ENCODE measurements at regions of chr17 and their contacts with region 1.

Region 1: DNA sequence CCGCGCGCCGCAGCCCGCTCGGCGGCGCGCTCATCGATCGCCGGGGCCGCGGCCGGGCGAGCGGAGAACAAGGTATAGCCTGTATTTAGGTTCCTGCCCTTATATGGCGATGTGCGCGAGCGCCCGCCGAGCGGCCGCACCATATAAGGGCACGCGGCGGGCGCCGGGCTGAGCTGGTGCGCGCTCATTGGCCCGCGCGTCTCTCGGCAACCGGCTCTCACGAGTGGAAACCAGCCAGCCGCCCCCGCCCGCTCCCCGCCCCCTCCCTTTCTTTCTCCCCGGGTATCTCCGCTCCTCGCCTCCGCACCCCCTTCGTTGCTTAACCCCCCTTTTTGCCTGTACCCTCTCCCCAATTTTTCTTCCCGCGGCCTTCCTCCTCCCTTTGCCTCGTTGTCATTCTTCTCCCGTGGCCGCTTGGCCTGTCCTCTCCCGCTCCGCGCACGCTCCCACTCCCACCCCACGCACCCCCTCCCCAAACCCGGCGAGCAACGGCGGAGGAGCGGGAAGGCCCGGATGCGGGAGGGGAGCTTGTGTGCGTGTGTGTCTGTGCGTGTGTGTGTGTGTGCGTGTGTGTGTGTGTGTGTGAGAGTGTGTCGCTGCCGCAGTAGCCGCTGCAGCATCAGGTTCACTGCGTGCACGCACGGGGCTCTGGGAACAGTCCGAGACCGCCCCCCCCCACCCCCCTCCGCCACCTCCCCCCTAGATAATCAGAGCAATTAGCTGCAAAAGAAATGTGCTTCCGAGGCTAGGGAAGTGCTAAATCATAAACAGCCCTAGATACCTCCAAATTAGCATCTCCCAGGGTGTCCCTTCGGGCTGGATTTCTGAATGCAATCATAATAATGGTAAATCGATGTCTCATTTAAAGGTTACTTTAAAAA is 13.5 kb upstream of the CBX8 start:
- DNase-seq: no peak
- H3K4me3 ChIP-seq: peak overlapping the region; percentile 7 to 31
- H3K27ac ChIP-seq: no peak overlapping the region
- H3K4me1 ChIP-seq: peaks cover 23 to 43% of the 10 kb centered on the region in 2 donors
- H3K27me3 ChIP-seq: peaks cover 67% of the 10 kb centered on the region
- CTCF ChIP-seq: no peak

Region 2: DNA sequence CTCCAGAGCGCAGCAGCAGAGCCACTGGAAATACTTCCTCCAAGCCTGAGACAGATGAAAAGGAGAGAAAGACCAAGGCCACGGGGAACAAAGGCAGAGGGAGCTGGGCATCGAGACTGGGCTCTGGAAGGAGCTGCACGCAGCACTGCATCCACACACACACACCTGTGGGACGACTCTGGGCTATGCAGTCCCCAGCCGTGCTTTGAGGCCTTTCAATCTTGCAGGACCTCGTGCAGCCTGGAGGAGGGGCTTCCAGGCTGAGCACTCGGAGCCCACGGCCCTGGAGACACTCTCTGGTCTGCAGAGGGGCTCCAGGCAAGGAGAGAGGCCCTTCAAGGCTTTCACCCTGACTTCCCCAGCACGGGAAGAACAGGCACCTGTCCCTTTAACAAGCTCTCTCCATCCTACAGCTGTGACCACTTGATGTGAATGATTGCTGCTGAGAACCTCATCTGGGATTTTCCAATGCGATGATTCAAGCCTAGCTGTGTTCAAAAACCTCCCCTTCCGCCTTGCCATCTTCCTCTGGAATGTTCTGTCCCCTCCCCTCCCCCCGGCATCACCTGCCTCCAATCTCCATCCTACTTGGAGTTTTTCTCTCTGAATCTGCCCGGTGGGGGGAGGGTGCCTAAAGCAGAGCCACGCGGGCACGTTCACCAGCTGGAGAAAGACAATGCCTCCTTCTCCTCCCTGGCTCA is 237.0 kb before region 1 on chr17:
- intact Hi-C with region 1: no loop called
- DNase-seq: no peak
- H3K4me3 ChIP-seq: no peak overlapping the region
- H3K27ac ChIP-seq: no peak overlapping the region
- H3K4me1 ChIP-seq: no peaks in the 10 kb centered on the region
- H3K27me3 ChIP-seq: no peaks in the 10 kb centered on the region
- CTCF ChIP-seq: no peak

Region 3: DNA sequence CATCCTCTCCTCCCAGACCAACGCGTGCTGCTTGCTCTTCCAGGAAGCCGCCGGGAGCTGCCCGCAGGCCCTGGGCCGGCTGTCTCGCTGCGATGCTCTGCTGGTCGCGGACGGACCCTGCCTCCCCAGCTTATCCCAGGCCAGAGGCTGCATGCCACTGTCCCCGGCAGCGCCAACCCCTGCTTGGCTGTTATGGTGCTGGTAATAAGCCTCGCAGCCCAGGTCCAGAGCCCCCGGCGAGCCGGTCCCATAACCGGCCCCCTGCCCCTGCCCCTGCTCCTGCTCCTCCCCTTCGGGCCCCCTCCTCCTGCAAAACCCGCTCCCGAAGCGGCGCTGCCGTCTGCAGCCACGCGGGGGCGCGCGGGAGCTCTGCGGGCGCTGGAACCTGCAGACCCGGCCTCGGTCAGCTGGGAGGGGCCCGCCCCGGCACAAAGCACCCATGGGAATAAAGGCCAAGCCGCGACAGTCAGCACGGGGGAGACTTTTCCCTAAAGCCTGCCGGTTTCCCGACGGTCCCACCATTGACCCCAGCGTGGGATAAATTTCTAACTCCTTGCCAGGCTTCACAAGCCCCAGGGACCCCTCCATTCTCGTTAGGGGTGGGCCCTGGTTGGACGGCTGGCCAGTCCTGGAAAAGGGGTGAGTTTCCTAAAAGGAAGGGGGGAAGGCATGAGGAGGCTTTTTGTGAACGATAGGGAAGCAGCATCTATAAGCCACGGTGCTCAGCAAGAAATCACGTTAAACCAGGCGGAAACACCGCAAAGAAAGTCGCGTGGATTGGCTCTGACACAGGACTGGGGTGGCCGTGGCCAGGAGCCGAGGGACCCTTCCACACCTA is 68.4 kb before region 1 on chr17:
- intact Hi-C with region 1: no loop called
- DNase-seq: peak in 1 of 2 donors; percentile 79
- H3K4me3 ChIP-seq: peak overlapping the region in 1 of 2 donors; percentile 9
- H3K27ac ChIP-seq: no peak overlapping the region
- H3K4me1 ChIP-seq: peaks cover 0 to 6% of the 10 kb centered on the region in 2 donors
- H3K27me3 ChIP-seq: peaks cover 12% of the 10 kb centered on the region
- CTCF ChIP-seq: peak; percentile 80 to 99 (median 97)

Region 4: GRCh38 chr17:79796763-79797491 is 13.4 kb before region 1 on chr17 and contains the start of gene CBX8:
- intact Hi-C with region 1: loop called (anchors 1 kb)
- DNase-seq: peak; percentile 96 to 100
- H3K4me3 ChIP-seq: peak within 1 kb of the TSS; percentile 79 to 82
- H3K27ac ChIP-seq: peak within 1 kb of the TSS; percentile 29 to 41
- H3K4me1 ChIP-seq: peaks cover 23 to 32% of the 10 kb centered on the region in 2 donors
- H3K27me3 ChIP-seq: peaks cover 52% of the 10 kb centered on the region
- CTCF ChIP-seq: peak in 1 of 3 experiments; percentile 10
- total RNA-seq, gene CBX8: 1.1 TPM